Dendritic cell treated with granulocyte-macrophage colony-stimulating factor and Interleukin-4, amounts not matched to agents 40 ng/mL and 50 ng/mL, for 4 days (primary cell): ENCODE measurements at regions of chr10 and their contacts with region 1.

Region 1: GRCh38 chr10:38094158-38094920 is at the start of gene ZNF37A:
- H3K4me3 Mint-ChIP-seq: peak within 1 kb of the TSS; percentile 90
- H3K27ac Mint-ChIP-seq: peak within 1 kb of the TSS; percentile 93
- H3K4me1 Mint-ChIP-seq: peaks cover 25% of the 10 kb centered on the region
- H3K27me3 Mint-ChIP-seq: no peaks in the 10 kb centered on the region

Region 2: GRCh38 chr10:37857287-37858211 is 236.8 kb before region 1 on chr10 and contains the start of gene ZNF248:
- intact Hi-C with region 1: loop called (anchors 1 kb)
- H3K4me3 Mint-ChIP-seq: peak within 1 kb of the TSS; percentile 81
- H3K27ac Mint-ChIP-seq: peak within 1 kb of the TSS; percentile 97
- H3K4me1 Mint-ChIP-seq: peaks cover 24% of the 10 kb centered on the region
- H3K27me3 Mint-ChIP-seq: peaks cover 4% of the 10 kb centered on the region

Region 3: GRCh38 chr10:37976091-37976879 is 118.1 kb before region 1 on chr10 and contains the start of gene ZNF25:
- intact Hi-C with region 1: loop called (anchors 1 kb)
- H3K4me3 Mint-ChIP-seq: peak within 1 kb of the TSS; percentile 92
- H3K27ac Mint-ChIP-seq: peak within 1 kb of the TSS; percentile 97
- H3K4me1 Mint-ChIP-seq: peaks cover 23% of the 10 kb centered on the region
- H3K27me3 Mint-ChIP-seq: no peaks in the 10 kb centered on the region

Region 4: GRCh38 chr10:38010119-38010903 is 84.0 kb before region 1 on chr10 and contains the start of gene ZNF33A:
- intact Hi-C with region 1: loop called (anchors 1 kb)
- H3K4me3 Mint-ChIP-seq: peak within 1 kb of the TSS; percentile 94
- H3K27ac Mint-ChIP-seq: peak within 1 kb of the TSS; percentile 100
- H3K4me1 Mint-ChIP-seq: peaks cover 43% of the 10 kb centered on the region
- H3K27me3 Mint-ChIP-seq: no peaks in the 10 kb centered on the region

Region 5: GRCh38 chr10:38038107-38038931 is 56.0 kb before region 1 on chr10:
- intact Hi-C with region 1: loop called (anchors 2 kb)
- H3K4me3 Mint-ChIP-seq: peak overlapping the region; percentile 71
- H3K27ac Mint-ChIP-seq: peak overlapping the region; percentile 83
- H3K4me1 Mint-ChIP-seq: no peaks in the 10 kb centered on the region
- H3K27me3 Mint-ChIP-seq: no peaks in the 10 kb centered on the region

Region 6: DNA sequence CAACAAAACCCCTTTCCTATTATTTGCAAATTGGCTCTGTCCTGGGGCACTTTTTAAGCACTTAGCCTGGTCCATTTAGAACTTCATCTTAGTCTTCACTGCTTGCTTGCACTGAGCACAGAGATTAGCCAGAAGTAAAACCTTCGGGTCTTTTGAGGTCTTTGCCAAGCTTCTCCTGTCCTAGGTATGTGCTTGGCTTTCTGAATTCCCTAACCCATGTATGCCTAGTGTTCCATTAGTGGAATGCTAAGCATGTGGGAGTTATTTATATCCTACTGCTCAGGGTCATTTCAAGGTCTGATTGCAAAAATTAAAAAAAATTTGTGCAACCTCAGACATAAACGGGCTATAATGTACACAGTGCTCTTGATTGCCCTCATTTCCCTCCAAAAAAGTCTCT is 17.8 kb after region 1 on chr10:
- intact Hi-C with region 1: no loop called
- H3K4me3 Mint-ChIP-seq: no peak overlapping the region
- H3K27ac Mint-ChIP-seq: no peak overlapping the region
- H3K4me1 Mint-ChIP-seq: no peaks in the 10 kb centered on the region
- H3K27me3 Mint-ChIP-seq: no peaks in the 10 kb centered on the region

Region 7: GRCh38 chr10:38143587-38143986 is 49.2 kb after region 1 on chr10:
- intact Hi-C with region 1: no loop called
- H3K4me3 Mint-ChIP-seq: no peak overlapping the region
- H3K27ac Mint-ChIP-seq: no peak overlapping the region
- H3K4me1 Mint-ChIP-seq: no peaks in the 10 kb centered on the region
- H3K27me3 Mint-ChIP-seq: no peaks in the 10 kb centered on the region